ENCODE measurements at regions of chr15 and their contacts with region 1.

Region 1: DNA sequence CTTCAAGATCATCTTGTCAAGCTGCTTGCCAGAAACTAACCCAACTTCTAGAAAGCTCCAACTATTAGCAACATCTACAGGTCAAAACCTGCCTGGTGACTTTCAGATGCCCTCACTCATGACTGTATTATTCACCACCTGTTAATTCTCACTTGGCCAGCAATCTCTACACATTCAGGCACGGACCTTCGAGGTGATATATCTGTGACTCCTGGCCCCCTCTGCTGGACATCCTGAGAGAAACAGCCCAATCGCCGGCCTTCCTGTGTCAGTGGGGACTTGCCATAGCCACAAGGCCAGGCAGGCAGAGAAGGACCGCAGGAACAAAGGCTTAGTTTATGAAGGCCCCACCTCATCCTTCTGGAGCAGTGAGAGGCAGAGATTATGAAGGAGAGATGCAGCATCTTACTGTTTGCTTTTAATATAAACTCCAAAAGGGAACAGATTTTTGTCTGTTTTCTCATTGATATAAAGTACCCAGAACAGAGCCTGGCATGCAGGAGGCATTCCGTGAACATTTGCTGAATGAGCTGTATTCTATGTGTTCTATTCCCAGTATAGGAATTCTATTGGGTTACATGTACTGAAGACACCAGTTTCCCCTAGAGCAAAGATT is 24.4 kb upstream of the OCA2 start:
- DNase-seq: peak in 2 of 3 donors; percentile 50 to 85
- ATAC-seq: peak; percentile 55 to 63
- H3K4me3 ChIP-seq: no peak overlapping the region
- H3K27ac ChIP-seq: no peak overlapping the region
- H3K4me1 ChIP-seq: peaks cover 3% of the 10 kb centered on the region
- H3K27me3 ChIP-seq: no peaks in the 10 kb centered on the region

Region 2: DNA sequence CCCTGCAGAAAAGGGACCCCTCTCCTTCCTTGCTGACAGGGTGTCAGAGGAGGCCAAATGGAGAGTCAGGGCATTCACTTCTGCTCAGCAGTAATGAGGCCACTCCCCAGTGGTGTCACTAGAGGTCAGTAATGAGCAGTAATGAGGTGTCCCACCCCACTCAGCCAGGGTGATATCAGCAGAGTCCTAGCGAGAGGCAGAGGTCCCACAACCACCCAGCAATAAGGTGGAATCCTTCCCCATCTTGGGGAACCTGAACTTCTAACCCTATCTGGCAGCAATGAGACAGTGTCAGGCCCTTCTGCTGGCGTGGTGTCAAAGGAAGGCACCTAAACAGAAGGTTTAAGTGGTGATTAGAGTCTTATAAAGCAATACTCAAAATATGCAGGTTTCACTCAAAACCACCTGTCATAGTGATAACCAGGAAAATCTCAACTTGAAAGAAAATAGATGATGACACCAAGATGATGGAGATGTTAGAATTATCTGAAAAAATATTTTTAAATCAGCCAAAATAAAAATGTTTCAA is 37.3 kb before region 1 on chr15:
- intact Hi-C with region 1: loop called in 2 of 4 experiments (anchors 2 to 5 kb)
- DNase-seq: peak in 2 of 3 donors; percentile 43 to 74
- ATAC-seq: peak; percentile 88 to 96
- H3K4me3 ChIP-seq: no peak overlapping the region
- H3K27ac ChIP-seq: no peak overlapping the region
- H3K4me1 ChIP-seq: no peaks in the 10 kb centered on the region
- H3K27me3 ChIP-seq: no peaks in the 10 kb centered on the region